ENCODE measurements at regions of chr11 and their contacts with region 1.

Region 1: DNA sequence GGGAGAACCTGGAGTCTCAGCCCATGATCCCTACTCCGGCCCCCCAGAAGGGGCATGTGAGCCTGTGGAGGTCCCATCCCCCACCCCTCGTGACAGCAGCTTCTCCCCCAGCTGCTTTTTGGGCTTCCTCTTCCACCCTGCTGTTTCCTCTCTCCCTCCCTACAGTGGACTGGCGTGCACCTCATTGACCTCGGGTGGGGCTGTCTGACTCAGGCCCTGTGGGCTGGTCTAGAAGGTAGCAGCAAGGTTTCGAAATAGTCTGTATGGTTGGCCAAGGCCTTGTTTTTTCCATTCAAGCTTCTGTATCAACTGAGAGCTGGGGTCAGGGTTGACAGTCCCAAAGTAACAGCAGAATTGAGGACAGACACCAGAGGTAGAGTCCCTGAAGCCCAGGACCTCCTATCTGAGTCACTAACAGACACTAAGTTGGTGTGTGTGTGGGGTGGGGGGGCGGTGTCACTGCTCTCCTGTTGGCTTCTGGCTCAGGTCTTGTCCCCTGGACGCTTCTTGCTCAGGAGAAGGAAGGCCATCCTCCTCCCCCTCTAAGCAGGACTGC is 7.7 kb downstream of the SLC37A2 start:
- DNase-seq: no peak
- ATAC-seq: peak; percentile 69
- H3K4me3 Mint-ChIP-seq: peak overlapping the region; percentile 40
- H3K27ac Mint-ChIP-seq: peak overlapping the region; percentile 82
- H3K4me1 Mint-ChIP-seq: peaks cover 71% of the 10 kb centered on the region
- H3K27me3 Mint-ChIP-seq: peaks cover 2% of the 10 kb centered on the region
- CTCF ChIP-seq: no peak

Region 2: DNA sequence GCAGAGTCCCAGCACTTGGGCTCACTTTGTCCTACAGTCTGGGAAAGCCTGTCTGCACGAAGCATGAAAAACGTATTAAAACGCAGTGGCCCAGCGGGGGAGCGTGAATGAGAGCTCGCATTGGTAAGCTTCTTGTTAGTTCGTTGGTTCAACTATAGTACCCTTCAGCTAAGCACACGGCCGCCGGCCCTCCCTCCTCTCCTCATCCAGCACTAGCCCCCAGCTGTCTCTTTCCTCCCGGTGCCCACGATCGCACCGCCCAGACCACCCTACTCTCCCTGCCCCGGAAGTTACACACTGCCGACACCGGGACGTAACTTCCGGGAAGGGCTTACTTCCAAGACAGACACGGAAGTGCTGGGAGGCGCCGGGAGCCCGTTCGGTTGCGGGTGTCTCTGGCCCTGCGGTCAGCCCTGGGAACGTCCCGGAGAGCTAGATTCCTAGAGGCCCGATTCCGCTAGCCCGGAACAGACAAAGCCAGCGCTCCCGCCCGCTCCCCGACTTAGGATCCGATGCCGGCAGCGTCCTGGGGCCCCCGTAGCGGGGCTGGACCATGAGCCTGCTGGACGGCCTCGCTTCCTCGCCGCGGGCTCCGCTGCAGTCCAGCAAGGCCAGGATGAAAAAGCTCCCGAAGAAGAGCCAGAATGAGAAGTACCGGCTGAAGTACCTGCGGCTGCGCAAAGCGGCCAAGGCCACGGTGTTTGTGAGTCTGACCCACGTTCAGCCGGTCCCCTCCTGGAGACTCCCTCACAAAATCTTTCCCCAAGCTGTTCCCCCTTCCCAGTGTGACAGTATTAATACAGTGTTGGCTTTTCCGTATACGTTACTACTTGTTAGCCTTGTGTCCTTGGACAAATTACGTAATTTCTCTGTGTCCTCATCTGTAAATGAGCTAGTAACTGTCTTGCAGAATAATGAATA is 448.0 kb before region 1 on chr11 and contains the start of gene TBRG1:
- CTCF ChIA-PET with region 1: no interaction called
- POLR2A ChIA-PET with region 1: no interaction called
- intact Hi-C with region 1: loop called (anchors 10 kb)
- DNase-seq: peak; percentile 71
- ATAC-seq: peak; percentile 97
- H3K4me3 Mint-ChIP-seq: peak within 1 kb of the TSS; percentile 94
- H3K27ac Mint-ChIP-seq: peak within 1 kb of the TSS; percentile 91
- H3K4me1 Mint-ChIP-seq: peaks cover 27% of the 10 kb centered on the region
- H3K27me3 Mint-ChIP-seq: peaks cover 22% of the 10 kb centered on the region
- CTCF ChIP-seq: no peak
- total RNA-seq, gene TBRG1: 43.7 and 54.6 TPM in 2 replicates

Region 3: GRCh38 chr11:124746621-124747243 is 324.0 kb before region 1 on chr11:
- CTCF ChIA-PET with region 1: no interaction called
- POLR2A ChIA-PET with region 1: no interaction called
- intact Hi-C with region 1: loop called (anchors 5 kb)
- DNase-seq: peak; percentile 73
- ATAC-seq: peak; percentile 89
- H3K4me3 Mint-ChIP-seq: peak overlapping the region; percentile 97
- H3K27ac Mint-ChIP-seq: peak overlapping the region; percentile 93
- H3K4me1 Mint-ChIP-seq: peaks cover 37% of the 10 kb centered on the region
- H3K27me3 Mint-ChIP-seq: peaks cover 2% of the 10 kb centered on the region
- CTCF ChIP-seq: no peak

Region 4: GRCh38 chr11:124800226-124800929 is 270.4 kb before region 1 on chr11 and contains the start of gene MSANTD2:
- CTCF ChIA-PET with region 1: no interaction called
- POLR2A ChIA-PET with region 1: no interaction called
- intact Hi-C with region 1: loop called (anchors 5 kb)
- DNase-seq: peak; percentile 85
- ATAC-seq: peak; percentile 84
- H3K4me3 Mint-ChIP-seq: peak within 1 kb of the TSS; percentile 92
- H3K27ac Mint-ChIP-seq: peak within 1 kb of the TSS; percentile 92
- H3K4me1 Mint-ChIP-seq: peaks cover 26% of the 10 kb centered on the region
- H3K27me3 Mint-ChIP-seq: no peaks in the 10 kb centered on the region
- CTCF ChIP-seq: no peak
- total RNA-seq, gene MSANTD2: 17.7 and 21.0 TPM in 2 replicates

Region 5: GRCh38 chr11:125036933-125037332 is 33.8 kb before region 1 on chr11:
- CTCF ChIA-PET with region 1: no interaction called
- POLR2A ChIA-PET with region 1: no interaction called
- intact Hi-C with region 1: loop called (anchors 5 kb)
- DNase-seq: no peak
- ATAC-seq: peak; percentile 66
- H3K4me3 Mint-ChIP-seq: no peak overlapping the region
- H3K27ac Mint-ChIP-seq: peak overlapping the region; percentile 10
- H3K4me1 Mint-ChIP-seq: peaks cover 7% of the 10 kb centered on the region
- H3K27me3 Mint-ChIP-seq: no peaks in the 10 kb centered on the region
- CTCF ChIP-seq: no peak

Region 6: DNA sequence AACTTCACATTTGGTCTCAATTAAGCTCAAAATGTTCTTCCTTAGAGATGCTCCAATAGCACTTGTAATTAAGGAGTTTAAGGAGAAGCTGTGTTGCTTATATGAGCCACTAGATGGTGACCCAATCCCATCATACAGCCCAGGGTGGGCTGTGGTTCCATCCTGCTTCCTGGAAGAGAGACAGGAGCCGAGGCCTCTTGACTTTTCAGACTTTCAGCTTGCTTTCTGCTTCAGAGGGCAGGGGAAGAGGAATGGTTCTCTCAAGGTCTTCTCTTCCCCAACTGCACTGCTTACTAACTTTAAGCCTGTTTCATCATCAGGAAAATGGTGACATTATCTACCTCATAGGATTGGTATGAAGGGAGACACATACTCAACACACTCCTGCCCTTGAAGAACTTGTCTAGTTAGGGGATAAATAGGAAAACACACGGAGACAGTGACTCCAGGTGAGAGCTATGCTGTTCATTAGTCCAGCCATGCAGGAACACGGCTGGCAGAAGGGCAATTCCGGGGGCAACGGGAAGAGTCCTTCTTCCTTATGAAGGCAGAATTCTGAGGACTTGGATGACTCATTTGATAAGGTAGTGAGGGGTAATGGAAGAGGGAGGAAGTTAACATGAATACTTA is 20.6 kb after region 1 on chr11:
- CTCF ChIA-PET with region 1: interaction called, 10 read pairs
- POLR2A ChIA-PET with region 1: no interaction called
- intact Hi-C with region 1: no loop called
- DNase-seq: no peak
- ATAC-seq: peak; percentile 37
- H3K4me3 Mint-ChIP-seq: no peak overlapping the region
- H3K27ac Mint-ChIP-seq: no peak overlapping the region
- H3K4me1 Mint-ChIP-seq: peaks cover 2% of the 10 kb centered on the region
- H3K27me3 Mint-ChIP-seq: no peaks in the 10 kb centered on the region
- CTCF ChIP-seq: no peak

Region 7: GRCh38 chr11:125519860-125520834 is 449.4 kb after region 1 on chr11:
- CTCF ChIA-PET with region 1: no interaction called
- POLR2A ChIA-PET with region 1: no interaction called
- intact Hi-C with region 1: no loop called
- DNase-seq: no peak
- ATAC-seq: no peak
- H3K4me3 Mint-ChIP-seq: no peak overlapping the region
- H3K27ac Mint-ChIP-seq: no peak overlapping the region
- H3K4me1 Mint-ChIP-seq: peaks cover 15% of the 10 kb centered on the region
- H3K27me3 Mint-ChIP-seq: no peaks in the 10 kb centered on the region
- CTCF ChIP-seq: no peak

Region 8: DNA sequence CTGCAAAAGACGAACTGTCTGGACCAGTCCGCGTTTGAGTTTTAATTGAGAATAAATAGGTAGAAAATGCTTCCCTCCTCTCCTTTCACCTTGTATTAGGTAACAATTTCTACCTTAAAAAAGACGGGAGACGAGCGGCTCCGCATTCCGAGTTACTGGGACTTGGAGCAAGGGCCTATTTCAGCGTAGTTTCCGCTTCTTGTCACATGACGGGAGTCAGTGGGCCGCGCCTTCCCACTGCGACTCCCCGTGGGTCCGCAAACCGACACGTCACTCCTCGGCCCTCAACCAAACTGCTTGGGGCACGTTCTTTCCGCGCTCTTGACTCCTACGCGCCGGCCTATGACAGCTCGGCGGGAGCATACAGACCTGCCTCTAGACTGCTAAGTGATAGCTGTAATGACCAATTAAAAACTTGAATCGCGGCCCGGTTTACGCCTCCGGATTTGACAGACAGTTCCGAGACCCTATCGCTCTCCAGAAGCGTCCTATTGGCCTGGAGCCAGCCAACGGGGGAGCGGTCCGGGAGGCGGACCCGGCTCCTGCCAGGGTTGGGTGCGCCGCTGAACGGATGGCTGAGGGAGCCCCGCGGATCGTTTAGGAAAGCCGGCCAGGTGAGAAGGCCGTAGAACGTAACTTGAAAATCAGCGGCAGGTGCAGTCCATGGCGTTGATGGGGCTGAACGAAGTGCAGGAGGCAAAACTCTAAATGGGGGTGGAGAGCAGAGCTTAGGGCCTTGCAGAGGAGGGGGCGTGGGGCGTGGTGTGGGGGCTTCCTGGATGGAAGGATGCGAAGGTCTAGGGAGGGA is 521.7 kb after region 1 on chr11 and contains the start of gene STT3A:
- CTCF ChIA-PET with region 1: no interaction called
- POLR2A ChIA-PET with region 1: no interaction called
- intact Hi-C with region 1: loop called (anchors 5 kb)
- DNase-seq: peak; percentile 90
- ATAC-seq: peak; percentile 92
- H3K4me3 Mint-ChIP-seq: peak within 1 kb of the TSS; percentile 95
- H3K27ac Mint-ChIP-seq: peak within 1 kb of the TSS; percentile 99
- H3K4me1 Mint-ChIP-seq: peaks cover 58% of the 10 kb centered on the region
- H3K27me3 Mint-ChIP-seq: no peaks in the 10 kb centered on the region
- CTCF ChIP-seq: no peak
- total RNA-seq, gene STT3A: 79.4 and 86.5 TPM in 2 replicates

Measured in activated B cell treated with CpG ODN at 0.5 μM for 24 hours (primary cell).